HepG2 (cell line): ENCODE measurements at regions of chr3 and their contacts with region 1.

Region 1: DNA sequence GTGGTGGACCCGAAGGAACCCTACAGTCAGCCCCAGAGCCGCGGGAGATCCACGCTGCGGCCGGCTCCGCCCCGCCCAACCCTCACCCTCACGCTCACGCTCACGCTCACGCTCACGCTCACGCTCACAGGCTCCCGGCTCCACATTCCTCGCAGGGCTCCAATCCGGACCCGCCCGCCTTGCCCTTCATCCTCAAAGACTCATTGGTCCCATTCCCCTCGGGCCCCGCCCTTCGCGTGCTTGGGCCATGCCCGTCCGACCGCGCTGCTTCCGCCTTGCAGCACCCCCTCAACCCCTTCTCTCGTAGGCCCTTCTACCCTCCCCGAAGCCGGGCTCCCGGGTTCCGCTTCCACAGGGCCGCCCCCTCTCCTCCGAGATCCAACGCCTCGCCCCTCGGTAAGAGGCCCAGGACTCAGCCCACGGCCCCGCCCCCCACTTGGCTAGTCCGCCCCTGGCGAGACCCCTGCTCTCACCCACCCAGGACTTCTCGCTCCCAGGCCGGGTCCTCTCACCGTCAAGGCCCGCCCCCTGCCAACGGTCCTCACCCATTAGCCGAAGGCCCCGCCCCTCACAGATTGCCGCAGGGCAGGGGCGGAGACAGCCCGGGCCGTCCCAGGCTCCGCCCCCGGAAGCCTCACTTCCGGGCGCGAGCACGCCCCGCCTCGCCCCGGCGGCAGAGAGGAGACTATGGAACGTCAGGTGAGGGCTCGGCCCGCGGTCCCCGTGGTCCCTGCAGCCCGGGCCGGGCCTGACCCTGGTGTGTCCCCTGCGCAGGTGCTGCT is at the start of gene APEH:
- DNase-seq: peak; percentile 96
- ATAC-seq: peak; percentile 81
- H3K4me3 ChIP-seq: peak within 1 kb of the TSS; percentile 80 to 99 (median 80)
- H3K27ac ChIP-seq: peak within 1 kb of the TSS; percentile 85
- H3K4me1 ChIP-seq: peaks cover 64% of the 10 kb centered on the region
- H3K27me3 ChIP-seq: no peaks in the 10 kb centered on the region
- CTCF ChIP-seq: no peak
- EP300 ChIP-seq: no peak
- POLR2A ChIP-seq: no peak; a peak in 2 of 4 replicates
- RAD21 ChIP-seq: no peak
- total RNA-seq, gene APEH: 116 and 130 TPM in 2 replicates

Region 2: GRCh38 chr3:49454458-49454857 is 219.4 kb before region 1 on chr3:
- CTCF ChIA-PET with region 1: interaction called, 5 read pairs
- POLR2A ChIA-PET with region 1: interaction called, 3 read pairs
- in situ Hi-C with region 1: no loop called
- intact Hi-C with region 1: loop called (anchors 1 kb)
- DNase-seq: peak; percentile 66
- ATAC-seq: peak; percentile 91
- H3K4me3 ChIP-seq: no peak overlapping the region
- H3K27ac ChIP-seq: no peak overlapping the region
- H3K4me1 ChIP-seq: peaks cover 46% of the 10 kb centered on the region
- H3K27me3 ChIP-seq: no peaks in the 10 kb centered on the region
- CTCF ChIP-seq: peak; percentile 90
- EP300 ChIP-seq: no peak
- POLR2A ChIP-seq: no peak
- RAD21 ChIP-seq: peak; percentile 63

Region 3: GRCh38 chr3:49469936-49470713 is 203.8 kb before region 1 on chr3 and contains the start of gene DAG1:
- CTCF ChIA-PET with region 1: no interaction called
- POLR2A ChIA-PET with region 1: interaction called, 6 read pairs
- in situ Hi-C with region 1: no loop called
- intact Hi-C with region 1: loop called (anchors 5 kb)
- DNase-seq: peak; percentile 89
- ATAC-seq: peak; percentile 87
- H3K4me3 ChIP-seq: peak within 1 kb of the TSS; percentile 74 to 94 (median 84)
- H3K27ac ChIP-seq: peak within 1 kb of the TSS; percentile 93
- H3K4me1 ChIP-seq: peaks cover 58% of the 10 kb centered on the region
- H3K27me3 ChIP-seq: no peaks in the 10 kb centered on the region; a peak in 1 of 5 replicates
- CTCF ChIP-seq: peak; percentile 17; the same call in 1 of the 2 replicates
- EP300 ChIP-seq: no peak
- POLR2A ChIP-seq: peak; percentile 34 to 78
- RAD21 ChIP-seq: peak; percentile 70
- total RNA-seq, gene DAG1: 26.0 and 50.4 TPM in 2 replicates

Region 4: GRCh38 chr3:49566312-49566711 is 107.6 kb before region 1 on chr3:
- CTCF ChIA-PET with region 1: interaction called, 10 read pairs
- POLR2A ChIA-PET with region 1: no interaction called
- in situ Hi-C with region 1: loop called (anchors 10 kb)
- intact Hi-C with region 1: no loop called
- DNase-seq: no peak
- ATAC-seq: no peak
- H3K4me3 ChIP-seq: no peak overlapping the region
- H3K27ac ChIP-seq: no peak overlapping the region
- H3K4me1 ChIP-seq: peaks cover 40% of the 10 kb centered on the region
- H3K27me3 ChIP-seq: no peaks in the 10 kb centered on the region
- CTCF ChIP-seq: peak; percentile 58
- EP300 ChIP-seq: no peak
- POLR2A ChIP-seq: no peak
- RAD21 ChIP-seq: no peak

Region 5: DNA sequence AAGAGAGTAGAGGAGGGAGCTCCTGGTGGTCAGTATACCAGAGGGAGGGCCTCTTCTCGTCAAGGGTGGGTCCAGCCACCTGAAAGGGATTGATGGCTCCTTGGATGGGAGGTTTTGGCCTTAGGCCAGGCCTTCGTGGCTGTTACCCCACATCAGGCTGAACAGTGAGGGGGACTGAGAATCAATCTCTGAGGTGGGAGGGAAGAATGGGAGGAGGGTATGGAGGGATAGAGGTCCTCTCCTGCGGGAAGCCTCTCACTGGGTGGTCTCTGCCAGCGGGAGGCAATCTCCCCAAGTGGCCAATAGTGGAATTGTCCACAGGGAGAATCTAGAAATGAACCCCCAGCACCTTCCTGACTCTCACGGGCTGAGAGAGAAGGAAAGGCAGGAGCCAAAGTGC is 66.1 kb before region 1 on chr3:
- CTCF ChIA-PET with region 1: no interaction called
- POLR2A ChIA-PET with region 1: no interaction called
- in situ Hi-C with region 1: no loop called
- intact Hi-C with region 1: loop called (anchors 5 kb)
- DNase-seq: no peak
- ATAC-seq: peak; percentile 48
- H3K4me3 ChIP-seq: no peak overlapping the region
- H3K27ac ChIP-seq: no peak overlapping the region
- H3K4me1 ChIP-seq: peaks cover 22% of the 10 kb centered on the region
- H3K27me3 ChIP-seq: no peaks in the 10 kb centered on the region
- CTCF ChIP-seq: no peak
- EP300 ChIP-seq: no peak
- POLR2A ChIP-seq: no peak
- RAD21 ChIP-seq: no peak

Region 6: DNA sequence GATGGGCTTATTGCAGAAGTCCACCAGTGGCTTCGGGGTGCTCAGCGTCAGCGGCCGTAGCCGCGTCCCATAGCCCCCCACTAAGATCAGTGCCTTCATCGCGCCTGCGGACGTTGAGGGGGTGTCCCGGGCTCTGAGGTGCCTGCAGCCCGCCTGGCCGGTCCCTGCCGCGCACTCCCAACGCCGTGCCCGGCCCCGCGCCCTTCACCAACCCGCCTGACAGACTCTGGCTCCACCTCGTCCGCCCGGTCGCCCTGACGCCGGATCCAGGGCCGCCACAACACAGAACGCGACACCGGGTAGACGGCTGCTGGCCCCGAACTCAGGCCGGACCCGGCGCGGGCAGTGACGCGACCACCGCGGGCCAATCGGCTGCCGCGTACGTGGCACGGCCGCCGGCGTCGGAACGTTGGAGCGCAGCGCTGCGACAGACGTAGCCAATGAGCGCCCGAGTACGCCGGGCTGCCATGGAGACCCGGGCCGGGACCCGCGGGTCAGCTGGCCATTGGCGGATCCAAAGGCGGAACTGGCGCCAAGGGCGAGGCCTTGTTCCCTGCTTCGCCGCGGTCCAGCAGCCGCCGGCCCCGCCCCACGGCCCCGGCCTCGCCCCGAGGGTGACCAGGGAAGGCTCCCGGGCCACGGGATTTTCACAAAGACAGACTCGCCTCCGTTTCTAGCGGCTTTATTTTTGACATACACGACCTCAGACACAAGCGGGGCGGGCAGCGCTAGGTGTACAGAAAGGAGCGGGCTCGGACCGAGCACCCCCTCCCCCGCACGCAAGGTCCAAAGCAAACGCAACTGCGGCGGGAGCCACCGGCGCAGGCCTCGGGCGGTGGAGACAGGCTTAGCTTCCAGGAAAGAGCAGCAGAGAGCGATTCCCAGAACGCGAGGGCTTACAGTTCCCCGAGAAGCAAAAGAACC is 50.0 kb after region 1 on chr3 and contains the start of gene GMPPB:
- CTCF ChIA-PET with region 1: no interaction called
- POLR2A ChIA-PET with region 1: no interaction called
- in situ Hi-C with region 1: no loop called
- intact Hi-C with region 1: loop called (anchors 2 kb)
- DNase-seq: peak; percentile 93
- ATAC-seq: peak; percentile 89
- H3K4me3 ChIP-seq: peak within 1 kb of the TSS; percentile 80 to 100 (median 97); a peak in 5 of 6 replicates
- H3K27ac ChIP-seq: peak within 1 kb of the TSS; percentile 87
- H3K4me1 ChIP-seq: peaks cover 21% of the 10 kb centered on the region
- H3K27me3 ChIP-seq: no peaks in the 10 kb centered on the region
- CTCF ChIP-seq: peak; percentile 2
- EP300 ChIP-seq: no peak
- POLR2A ChIP-seq: peak in 1 of 2 experiments; percentile 16; a peak in 2 of 4 replicates
- RAD21 ChIP-seq: peak; percentile 63
- total RNA-seq, gene GMPPB: 21.7 and 23.1 TPM in 2 replicates